Activated T-helper 2 cell treated with anti-CD3 and anti-CD28 coated beads, Interferon-gamma antibody, Interleukin-2, Interleukin-4, amounts not matched to agents 10 μg/mL and 5 μg/mL and 100 μg/mL, durations not matched to agents 14 hours and 24 hours and 36 hours (primary cell): ENCODE measurements at regions of chr6 and their contacts with region 1.

Region 1: GRCh38 chr6:46011241-46012085 is 4.2 kb downstream of the CLIC5 start:
- DNase-seq: peak; percentile 75
- H3K4me3 Mint-ChIP-seq: peak overlapping the region; percentile 30
- H3K27ac Mint-ChIP-seq: peak overlapping the region; percentile 80
- H3K4me1 Mint-ChIP-seq: peaks cover 58% of the 10 kb centered on the region
- H3K27me3 Mint-ChIP-seq: peaks cover 24% of the 10 kb centered on the region

Region 2: GRCh38 chr6:45209762-45210161 is 801.7 kb before region 1 on chr6:
- intact Hi-C with region 1: loop called (anchors 10 kb)
- DNase-seq: no peak
- H3K4me3 Mint-ChIP-seq: no peak overlapping the region
- H3K27ac Mint-ChIP-seq: peak overlapping the region; percentile 47
- H3K4me1 Mint-ChIP-seq: peaks cover 50% of the 10 kb centered on the region
- H3K27me3 Mint-ChIP-seq: no peaks in the 10 kb centered on the region

Region 3: DNA sequence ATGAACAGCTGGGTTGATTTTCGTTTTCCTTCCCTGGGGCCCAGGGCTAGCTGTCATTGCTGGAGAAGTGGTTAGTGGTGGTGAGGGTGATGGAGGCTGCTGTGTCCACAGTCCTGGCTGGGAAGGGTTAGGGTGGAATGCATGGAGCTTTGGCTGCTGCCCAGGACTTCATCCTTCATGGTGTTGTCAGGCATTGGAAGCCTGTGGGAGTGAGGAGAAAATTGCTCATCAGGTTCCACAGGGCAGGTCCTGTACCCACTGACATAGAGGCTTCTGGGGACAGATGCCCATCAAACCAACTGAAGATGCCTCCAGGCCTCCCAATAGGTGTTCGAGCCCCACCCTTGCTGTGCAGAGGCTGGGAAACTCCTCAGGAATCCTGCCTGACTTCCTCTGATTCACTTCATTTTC is 371.4 kb before region 1 on chr6:
- intact Hi-C with region 1: loop called (anchors 5 kb)
- DNase-seq: no peak
- H3K4me3 Mint-ChIP-seq: no peak overlapping the region
- H3K27ac Mint-ChIP-seq: peak overlapping the region; percentile 31
- H3K4me1 Mint-ChIP-seq: peaks cover 24% of the 10 kb centered on the region
- H3K27me3 Mint-ChIP-seq: no peaks in the 10 kb centered on the region

Region 4: GRCh38 chr6:45830441-45831139 is 180.9 kb before region 1 on chr6:
- intact Hi-C with region 1: loop called (anchors 10 kb)
- DNase-seq: peak; percentile 48
- H3K4me3 Mint-ChIP-seq: peak overlapping the region; percentile 79
- H3K27ac Mint-ChIP-seq: peak overlapping the region; percentile 94
- H3K4me1 Mint-ChIP-seq: peaks cover 61% of the 10 kb centered on the region
- H3K27me3 Mint-ChIP-seq: no peaks in the 10 kb centered on the region

Region 5: GRCh38 chr6:46129629-46130511 is 118.4 kb after region 1 on chr6 and contains the start of gene ENPP4:
- intact Hi-C with region 1: loop called (anchors 2 kb)
- DNase-seq: peak; percentile 88
- H3K4me3 Mint-ChIP-seq: peak within 1 kb of the TSS; percentile 90
- H3K27ac Mint-ChIP-seq: peak within 1 kb of the TSS; percentile 51
- H3K4me1 Mint-ChIP-seq: peaks cover 18% of the 10 kb centered on the region
- H3K27me3 Mint-ChIP-seq: peaks cover 11% of the 10 kb centered on the region
- total RNA-seq, gene ENPP4: 5.4 TPM in 2 replicates

Region 6: GRCh38 chr6:46832816-46833215 is 821.4 kb after region 1 on chr6:
- intact Hi-C with region 1: no loop called
- DNase-seq: no peak
- H3K4me3 Mint-ChIP-seq: no peak overlapping the region
- H3K27ac Mint-ChIP-seq: no peak overlapping the region
- H3K4me1 Mint-ChIP-seq: no peaks in the 10 kb centered on the region
- H3K27me3 Mint-ChIP-seq: peaks cover 3% of the 10 kb centered on the region